Posterior cingulate gyrus (tissue), 11 donors: ENCODE measurements at regions of chr1 and their contacts with region 1.

Region 1: DNA sequence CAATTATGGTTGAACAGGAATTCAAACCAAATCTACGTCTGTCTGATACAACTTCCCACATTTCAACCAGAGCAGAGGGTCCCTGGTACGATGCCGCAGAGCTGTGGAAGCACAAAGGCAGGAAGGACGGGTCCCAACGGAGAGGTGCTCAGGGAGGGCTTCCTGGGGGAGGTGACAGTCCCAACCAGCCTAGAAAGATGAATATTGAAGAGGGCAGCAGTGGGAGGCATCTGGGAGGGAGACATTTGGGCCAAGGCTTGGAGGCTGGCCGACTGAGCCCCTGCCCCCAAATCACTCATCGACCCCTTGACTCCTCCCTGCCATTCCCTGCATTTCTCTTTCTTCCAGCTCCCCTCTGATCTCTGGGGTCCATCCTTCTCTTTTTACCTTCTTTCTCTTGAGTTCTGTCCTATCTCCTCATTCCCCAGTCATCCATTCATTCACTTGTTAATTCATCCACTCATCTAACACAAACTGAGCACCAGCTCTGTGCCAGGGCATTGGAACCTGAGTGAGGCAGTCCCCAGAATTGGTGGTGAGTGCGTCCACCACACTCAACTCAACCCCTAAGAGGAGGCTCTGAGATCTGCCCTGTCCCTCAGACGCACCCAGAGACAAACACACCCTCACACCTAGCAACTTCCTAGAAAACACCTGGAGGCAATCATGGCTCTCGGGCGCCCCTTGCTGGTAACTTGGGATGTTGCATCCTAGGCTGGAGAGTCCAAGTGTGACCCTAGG is 13.2 kb upstream of the CELA3B start:
- DNase-seq: peak; percentile 50 to 96 (median 80)

Region 2: DNA sequence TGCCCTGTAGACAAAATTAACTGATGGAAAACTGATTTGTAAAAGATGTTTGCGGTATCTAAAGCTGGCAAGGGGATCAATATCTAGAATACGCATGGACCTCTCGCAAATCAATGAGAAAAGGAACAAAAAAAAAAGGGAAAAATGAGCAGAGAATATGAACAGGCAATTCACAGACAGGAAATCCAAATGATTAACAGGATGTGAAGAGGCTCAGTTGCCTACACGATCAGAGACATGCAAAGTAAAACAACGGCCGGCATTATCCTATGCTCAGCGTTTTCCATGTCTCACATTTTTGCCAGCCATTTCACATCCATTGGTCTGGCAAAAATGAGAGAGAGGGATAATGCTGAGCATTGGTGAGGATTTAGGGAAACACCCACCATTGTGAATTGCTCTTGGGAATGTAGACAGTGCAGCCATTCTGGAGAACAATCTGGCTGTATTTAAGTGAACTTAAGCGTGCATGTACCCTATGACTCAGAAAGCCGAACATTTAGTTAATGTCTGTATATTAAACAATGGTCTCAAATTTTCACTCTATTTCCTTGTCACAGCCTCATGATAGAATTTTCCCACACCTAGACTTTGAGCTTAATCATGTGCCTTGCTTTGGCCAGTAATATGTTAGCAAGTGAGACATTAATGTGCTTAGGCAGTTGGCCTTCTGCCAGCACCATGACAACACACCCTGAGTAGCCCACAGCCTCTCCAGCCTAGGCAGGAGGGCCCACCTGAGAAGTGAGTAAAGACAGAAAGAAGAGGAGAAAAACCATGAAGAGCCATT is 584.7 kb before region 1 on chr1:
- intact Hi-C with region 1: loop called (anchors 10 kb)
- DNase-seq: no peak

Region 3: DNA sequence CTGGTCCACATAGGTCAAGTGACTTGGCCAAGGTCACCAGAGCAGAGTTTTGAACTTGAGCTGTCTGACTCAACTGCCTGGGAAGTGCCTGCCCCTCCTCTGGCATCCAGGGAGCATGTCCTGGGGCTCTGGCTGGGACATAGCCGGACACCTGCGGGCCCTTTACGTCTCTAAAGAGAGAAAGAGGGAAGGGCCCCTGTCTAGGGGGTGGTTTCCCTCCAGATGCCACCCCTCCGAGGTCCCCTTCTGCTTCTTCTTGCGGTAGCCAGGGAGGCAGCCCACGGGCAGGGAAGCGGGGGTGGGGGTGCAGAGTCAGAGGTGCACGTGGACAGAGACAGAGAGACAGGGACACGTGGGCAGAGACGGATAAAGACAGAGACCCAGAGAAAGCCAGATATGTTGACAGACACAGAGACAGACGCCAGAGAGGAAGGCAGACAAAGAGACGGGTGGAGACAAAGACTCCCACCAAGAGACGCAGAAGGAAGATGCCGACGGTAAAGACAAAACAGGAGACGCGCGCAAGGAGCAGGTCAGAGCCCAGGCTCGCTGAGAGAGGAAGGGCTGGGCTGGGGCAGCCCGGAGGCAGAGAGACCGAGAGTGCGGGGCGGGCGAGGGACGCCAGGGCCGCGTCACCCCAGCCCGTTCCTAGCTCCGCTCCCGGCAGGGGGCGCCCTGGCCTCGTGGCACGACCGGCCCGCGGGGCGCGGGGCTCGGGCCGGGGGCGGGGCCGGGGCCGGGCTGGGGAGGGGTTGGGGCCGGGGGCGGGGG is 454.9 kb before region 1 on chr1:
- intact Hi-C with region 1: loop called (anchors 1 kb)
- DNase-seq: peak in 7 of 10 donors; percentile 34 to 91 (median 51)

Region 4: DNA sequence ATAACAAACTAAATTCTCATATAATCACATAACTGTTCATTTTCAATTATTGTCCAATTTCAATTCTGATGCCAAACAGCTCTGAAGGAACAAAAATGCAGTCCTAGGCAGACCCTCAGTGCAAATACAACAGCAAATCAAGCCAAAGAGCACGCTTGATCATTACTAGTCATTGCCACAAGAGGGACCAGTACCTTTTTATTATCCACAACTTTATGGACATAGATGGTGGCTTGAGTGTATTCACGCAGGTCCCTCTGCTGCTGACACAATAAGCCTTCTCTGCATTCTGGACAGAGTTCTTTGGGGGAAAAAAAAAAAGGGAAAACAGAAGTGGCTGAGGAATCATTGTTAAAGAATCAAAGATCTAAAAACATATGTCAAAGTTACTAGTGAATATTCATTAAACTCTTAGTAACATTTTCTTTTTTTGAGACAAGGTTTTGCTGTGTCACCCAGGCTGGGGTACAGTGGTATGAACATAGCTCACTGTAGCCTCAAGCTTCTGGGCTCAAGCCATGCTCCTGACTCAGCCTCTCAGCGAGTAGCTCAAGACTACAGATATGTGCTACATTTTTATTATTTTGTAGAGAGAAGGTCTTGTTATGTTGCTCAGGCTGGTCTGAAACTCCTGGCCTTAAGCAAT is 260.2 kb before region 1 on chr1:
- intact Hi-C with region 1: loop called (anchors 10 kb)
- DNase-seq: no peak

Region 5: GRCh38 chr1:21946836-21947587 is 16.6 kb before region 1 on chr1:
- intact Hi-C with region 1: no loop called
- DNase-seq: peak in 1 of 10 donors; percentile 35